GM10248 (cell line): ENCODE measurements at regions of chr6 and their contacts with region 1.

Region 1: GRCh38 chr6:118565311-118565960 is 17.3 kb downstream of the PLN start:
- DNase-seq: peak; percentile 65
- CTCF ChIP-seq: peak; percentile 75

Region 2: DNA sequence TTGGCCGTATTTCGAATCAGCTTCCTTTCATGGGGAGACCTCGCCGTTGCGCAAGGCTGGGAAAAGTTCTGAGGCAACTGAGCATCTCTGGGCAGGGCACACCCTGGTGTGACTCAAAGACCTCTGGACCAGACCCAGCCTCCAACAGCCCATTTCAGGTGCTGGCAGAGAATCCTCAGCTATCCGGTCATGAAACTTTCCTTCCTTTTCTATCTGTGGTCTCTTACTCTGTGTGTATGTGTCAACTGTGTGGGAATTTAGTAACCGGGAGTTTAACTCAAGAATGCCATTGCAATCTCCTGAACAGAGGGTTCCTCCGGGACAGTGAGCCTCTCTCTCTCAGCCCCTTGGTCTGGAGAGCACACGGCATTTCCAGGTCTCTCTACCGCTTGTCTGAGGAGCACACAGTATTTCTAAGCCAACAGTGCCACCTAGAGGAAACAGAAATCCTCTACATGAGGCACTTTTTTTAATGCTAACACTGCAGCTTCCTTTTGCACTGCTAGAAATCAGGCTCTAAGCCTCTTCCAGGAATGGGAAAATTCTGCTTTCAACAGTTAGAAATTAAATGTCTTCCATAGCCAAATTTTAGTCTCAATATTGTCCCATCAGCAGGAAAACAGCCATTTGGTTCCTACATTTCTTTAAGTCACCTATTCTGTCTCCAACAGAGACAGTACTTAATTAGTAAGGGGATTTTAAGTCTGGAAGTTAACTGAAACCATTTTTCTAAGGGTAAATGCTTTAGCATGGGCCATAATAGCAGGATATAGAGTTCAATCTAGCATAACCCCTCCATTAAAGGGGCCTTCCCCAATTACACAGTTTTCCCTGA is 15.4 kb after region 1 on chr6:
- CTCF ChIA-PET with region 1: interaction called, 21 read pairs
- POLR2A ChIA-PET with region 1: no interaction called
- DNase-seq: peak; percentile 25
- CTCF ChIP-seq: peak; percentile 19

Region 3: DNA sequence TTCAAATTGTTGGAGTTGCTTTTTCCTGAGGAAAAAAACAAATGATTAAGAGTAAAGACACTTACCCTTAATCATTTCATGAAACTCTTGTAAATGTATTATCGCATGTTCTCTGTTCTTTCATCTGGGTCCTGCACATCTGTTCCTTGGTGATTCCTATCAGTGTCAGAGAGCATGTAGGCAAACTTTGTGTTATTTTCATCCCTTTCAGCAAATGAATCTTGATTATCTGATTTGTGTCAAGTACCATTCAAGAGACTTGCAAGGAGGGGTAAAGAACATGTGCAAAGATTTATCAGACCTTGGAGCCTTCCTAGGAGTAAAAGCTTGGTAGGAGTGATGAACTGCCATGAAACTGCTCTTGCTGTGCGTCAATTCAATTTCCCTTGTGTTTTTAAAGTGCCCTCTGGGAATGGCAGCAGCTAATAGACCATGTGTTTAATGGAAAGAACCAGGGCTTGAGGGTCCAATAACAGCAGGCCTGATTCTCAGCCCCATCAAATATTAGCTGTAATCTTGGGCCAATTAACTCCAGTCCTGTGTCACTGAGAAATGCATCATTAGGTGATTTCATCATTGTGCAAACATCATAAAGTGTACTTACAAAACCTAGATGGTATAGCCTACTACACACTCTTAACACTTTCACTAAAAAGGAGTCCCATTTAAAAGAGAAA is 204.8 kb after region 1 on chr6:
- CTCF ChIA-PET with region 1: interaction called, 63 read pairs
- POLR2A ChIA-PET with region 1: no interaction called
- DNase-seq: no peak
- CTCF ChIP-seq: no peak

Region 4: DNA sequence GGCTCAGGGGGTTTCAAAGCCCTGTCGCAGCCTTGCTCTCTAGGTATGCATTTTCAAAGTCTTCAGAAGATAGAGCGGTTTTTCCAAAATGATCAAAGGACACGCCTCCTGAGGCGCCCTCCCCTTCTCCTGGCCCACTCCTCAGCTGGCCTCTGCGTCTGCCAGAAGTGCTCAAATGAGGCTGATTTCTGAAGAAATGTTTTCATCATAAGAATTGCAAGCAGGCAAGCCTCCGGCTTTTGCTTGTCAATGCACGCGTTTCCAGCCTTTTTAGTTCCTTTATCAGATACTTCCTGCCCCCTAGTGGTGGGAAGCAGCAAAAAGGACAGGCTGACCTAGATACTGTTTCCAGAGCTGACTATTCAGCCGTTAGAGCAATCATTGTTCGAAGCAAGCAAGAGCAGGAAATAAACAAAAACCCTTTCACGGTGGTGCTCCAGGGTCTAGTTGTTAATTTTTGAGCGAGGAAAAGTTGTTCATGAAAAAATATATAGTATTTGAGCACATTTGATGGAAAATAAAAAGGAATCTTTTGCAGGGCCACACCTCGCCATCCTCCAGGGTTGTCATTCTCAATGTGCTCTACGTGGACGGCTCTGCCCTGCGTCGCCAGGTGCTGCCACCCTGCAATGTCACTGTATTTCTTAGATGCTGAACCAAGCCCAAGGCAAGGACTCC is 235.1 kb after region 1 on chr6:
- CTCF ChIA-PET with region 1: interaction called, 32 read pairs
- POLR2A ChIA-PET with region 1: no interaction called
- DNase-seq: peak; percentile 81
- CTCF ChIP-seq: peak; percentile 90

Region 5: GRCh38 chr6:119110601-119111548 is 545.4 kb after region 1 on chr6:
- CTCF ChIA-PET with region 1: interaction called, 14 read pairs
- POLR2A ChIA-PET with region 1: no interaction called
- DNase-seq: peak; percentile 34
- CTCF ChIP-seq: peak; percentile 45